ENCODE measurements at regions of chr3 and their contacts with region 1.

Region 1: GRCh38 chr3:185282696-185283394 is 29.0 kb upstream of the EHHADH start:
- DNase-seq: no peak
- H3K4me3 ChIP-seq: no peak overlapping the region
- H3K4me1 ChIP-seq: no peaks in the 10 kb centered on the region
- H3K27me3 ChIP-seq: no peaks in the 10 kb centered on the region; the same call in none of the 2 replicates

Region 2: GRCh38 chr3:184874709-184875644 is 407.9 kb before region 1 on chr3:
- in situ Hi-C with region 1: loop called (anchors 25 kb)
- DNase-seq: peak; percentile 29 to 48
- H3K4me3 ChIP-seq: no peak overlapping the region
- H3K4me1 ChIP-seq: no peaks in the 10 kb centered on the region
- H3K27me3 ChIP-seq: no peaks in the 10 kb centered on the region

Region 3: DNA sequence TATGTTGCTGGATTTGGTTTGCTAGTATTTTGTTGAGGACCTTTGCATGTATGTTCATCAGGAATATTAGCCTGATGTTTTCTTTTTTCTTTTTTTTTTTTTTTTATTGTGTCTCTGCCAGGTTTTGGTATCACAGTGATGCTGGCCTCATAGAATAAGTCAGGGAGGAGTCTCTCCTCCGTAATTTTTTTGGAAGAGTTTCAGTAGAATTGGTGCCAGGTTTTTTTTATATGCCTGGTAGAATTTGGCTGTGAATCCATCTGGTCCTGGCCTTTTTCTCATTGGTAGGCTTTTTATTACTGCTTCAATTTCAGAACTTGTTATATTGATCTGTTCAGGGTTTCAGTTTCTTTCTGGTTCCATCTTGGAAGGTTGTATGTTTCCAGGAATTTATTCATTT is 305.0 kb before region 1 on chr3:
- in situ Hi-C with region 1: no loop called
- DNase-seq: no peak
- H3K4me3 ChIP-seq: no peak overlapping the region
- H3K4me1 ChIP-seq: peaks cover 10% of the 10 kb centered on the region
- H3K27me3 ChIP-seq: no peaks in the 10 kb centered on the region